ENCODE measurements at regions of chr14 and their contacts with region 1.

Region 1: GRCh38 chr14:24431569-24432258 is 2.0 kb downstream of the KHNYN start:
- DNase-seq: peak; percentile 95
- ATAC-seq: peak; percentile 84

Region 2: GRCh38 chr14:24241829-24242443 is 189.8 kb before region 1 on chr14:
- intact Hi-C with region 1: loop called (anchors 10 kb)
- DNase-seq: peak; percentile 96
- ATAC-seq: peak; percentile 96

Region 3: DNA sequence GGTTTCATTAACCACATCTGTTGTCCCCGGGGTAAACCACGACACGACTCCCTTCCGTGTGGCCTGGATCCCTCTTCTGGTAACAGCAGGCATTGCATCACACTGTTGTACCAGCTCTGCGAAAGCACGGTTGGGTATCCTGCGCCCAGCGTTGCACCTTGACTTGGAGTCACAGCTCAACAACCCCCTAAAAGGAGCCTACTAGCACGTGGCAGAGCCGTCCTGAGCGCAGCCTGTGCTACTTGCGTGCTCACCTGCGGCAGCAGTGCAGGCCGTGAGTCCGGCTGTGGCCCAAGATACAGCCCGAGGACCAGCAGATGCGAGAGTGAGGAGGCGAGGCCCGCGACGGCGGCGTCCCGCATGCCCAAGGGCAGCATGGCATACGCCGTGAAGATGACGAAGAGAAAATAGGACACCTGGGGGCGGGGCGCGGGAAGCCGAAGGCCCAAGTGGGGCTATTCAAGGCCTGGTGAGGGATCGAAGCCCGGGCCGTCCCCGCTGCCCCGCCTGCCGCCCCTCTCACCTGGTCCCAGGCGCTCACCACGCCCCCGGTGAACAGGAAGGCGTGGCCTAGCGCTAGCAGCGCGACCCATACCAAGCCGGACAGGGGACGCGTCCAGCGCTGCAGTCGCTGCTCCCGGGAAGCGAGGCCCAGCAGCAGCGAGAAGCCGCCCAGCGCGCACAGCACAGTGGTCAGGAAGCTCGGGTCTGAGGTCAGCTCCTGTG is 99.3 kb before region 1 on chr14:
- intact Hi-C with region 1: loop called (anchors 5 kb)
- DNase-seq: peak; percentile 85
- ATAC-seq: peak; percentile 76

Region 4: GRCh38 chr14:24366721-24367513 is 64.8 kb before region 1 on chr14:
- intact Hi-C with region 1: loop called (anchors 5 kb)
- DNase-seq: peak; percentile 94
- ATAC-seq: peak; percentile 87

Region 5: DNA sequence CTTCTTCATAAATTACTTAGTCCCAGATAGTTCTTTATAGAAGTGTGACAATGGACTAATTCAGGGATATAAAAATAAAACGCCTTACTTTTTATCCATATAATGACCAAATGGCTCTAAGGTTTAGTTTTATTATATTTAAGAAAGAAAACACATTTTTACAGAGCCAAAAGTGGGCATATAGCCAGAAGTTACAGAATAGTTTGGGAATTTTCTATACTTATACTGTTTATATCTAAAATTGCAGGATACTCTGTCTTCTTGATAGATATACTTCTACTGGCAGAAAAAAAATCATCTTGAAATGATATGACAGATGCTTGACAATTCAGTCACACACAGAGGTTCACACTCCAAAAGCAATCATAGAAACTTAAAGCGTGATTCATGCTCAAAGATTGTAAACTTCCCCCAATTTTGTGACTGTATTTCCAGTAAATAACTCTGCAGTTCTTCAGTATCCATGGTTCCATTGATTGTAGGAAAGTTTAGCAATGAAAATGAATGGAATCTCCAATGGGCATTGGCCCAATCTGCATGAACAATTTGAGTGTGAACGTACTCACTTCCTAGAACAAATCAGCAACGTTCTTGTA is 1858.3 kb after region 1 on chr14:
- intact Hi-C with region 1: loop called (anchors 5 kb)
- DNase-seq: no peak
- ATAC-seq: no peak